MCF 10A (cell line): ENCODE measurements at regions of chr1 and their contacts with region 1.

Region 1: GRCh38 chr1:154974063-154974807 is at the start of gene CKS1B:
- DNase-seq: peak; percentile 100
- H3K4me3 Mint-ChIP-seq: no peak within 1 kb of the TSS
- H3K27ac Mint-ChIP-seq: no peak within 1 kb of the TSS
- H3K4me1 Mint-ChIP-seq: peaks cover 32% of the 10 kb centered on the region
- H3K27me3 Mint-ChIP-seq: no peaks in the 10 kb centered on the region
- CTCF ChIP-seq: no peak
- total RNA-seq, gene CKS1B: 285 and 289 TPM in 2 replicates

Region 2: GRCh38 chr1:154936555-154937084 is 37.6 kb before region 1 on chr1 and contains the start of gene PMVK:
- CTCF ChIA-PET with region 1: interaction called, 5 read pairs
- POLR2A ChIA-PET with region 1: interaction called, 146 read pairs
- intact Hi-C with region 1: no loop called
- DNase-seq: peak; percentile 99
- H3K4me3 Mint-ChIP-seq: peak within 1 kb of the TSS; percentile 90
- H3K27ac Mint-ChIP-seq: peak within 1 kb of the TSS; percentile 100
- H3K4me1 Mint-ChIP-seq: peaks cover 49% of the 10 kb centered on the region
- H3K27me3 Mint-ChIP-seq: no peaks in the 10 kb centered on the region
- CTCF ChIP-seq: peak; percentile 26
- total RNA-seq, gene PMVK: 57.7 and 68.9 TPM in 2 replicates

Region 3: GRCh38 chr1:154992721-154993571 is 18.7 kb after region 1 on chr1:
- CTCF ChIA-PET with region 1: interaction called, 40 read pairs
- POLR2A ChIA-PET with region 1: interaction called, 1,917 read pairs
- intact Hi-C with region 1: no loop called
- DNase-seq: no peak
- H3K4me3 Mint-ChIP-seq: no peak overlapping the region
- H3K27ac Mint-ChIP-seq: peak overlapping the region; percentile 50
- H3K4me1 Mint-ChIP-seq: peaks cover 32% of the 10 kb centered on the region
- H3K27me3 Mint-ChIP-seq: no peaks in the 10 kb centered on the region
- CTCF ChIP-seq: no peak

Region 4: DNA sequence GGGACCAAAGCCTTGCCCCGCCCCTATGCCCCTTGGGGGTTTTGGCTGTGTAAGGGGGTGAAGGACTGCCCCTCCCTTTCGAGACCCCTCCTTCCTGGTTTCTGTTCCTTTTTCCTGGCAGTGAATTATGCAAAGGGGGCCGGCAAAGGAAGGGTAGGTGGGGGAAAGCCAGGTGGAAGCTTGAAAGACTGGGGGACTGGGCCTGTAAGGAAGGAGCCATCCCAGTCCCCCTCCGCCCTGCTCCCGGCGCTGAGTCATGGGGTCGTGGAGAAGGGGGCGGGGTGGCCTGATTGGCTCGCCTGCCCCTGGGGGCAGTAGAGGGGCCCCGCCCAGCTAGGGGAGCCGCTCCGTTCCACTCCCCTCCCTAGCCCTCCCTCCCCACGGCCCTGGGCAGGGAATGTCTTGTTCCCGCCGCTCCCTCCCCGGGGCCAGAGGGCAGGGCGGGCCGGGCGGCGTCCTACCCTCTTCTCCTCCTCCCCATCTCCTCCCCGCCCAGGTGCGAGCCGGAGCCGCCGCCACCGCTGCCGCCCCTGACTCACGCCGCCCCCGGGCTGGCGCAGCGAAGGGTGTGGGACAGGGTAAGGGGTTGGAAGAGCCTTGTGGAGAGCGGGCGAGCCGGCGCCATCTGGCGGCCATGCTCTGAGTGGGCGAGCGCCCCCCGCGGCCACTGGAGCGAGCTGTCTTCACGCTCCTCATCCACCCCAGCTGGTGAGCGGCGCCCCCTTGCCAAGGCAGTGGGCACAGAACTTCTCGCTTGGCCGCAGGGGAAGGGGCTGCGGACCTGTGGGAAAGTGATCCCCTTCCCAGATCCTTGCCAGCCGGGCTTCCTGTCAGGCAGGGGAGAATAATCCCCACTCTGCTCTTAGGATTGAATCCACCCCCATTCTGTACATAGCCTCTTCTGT is 43.1 kb after region 1 on chr1:
- CTCF ChIA-PET with region 1: interaction called, 8 read pairs
- POLR2A ChIA-PET with region 1: interaction called, 312 read pairs
- intact Hi-C with region 1: loop called (anchors 1 kb)
- DNase-seq: peak; percentile 99
- H3K4me3 Mint-ChIP-seq: peak overlapping the region; percentile 62
- H3K27ac Mint-ChIP-seq: peak overlapping the region; percentile 80
- H3K4me1 Mint-ChIP-seq: peaks cover 78% of the 10 kb centered on the region
- H3K27me3 Mint-ChIP-seq: no peaks in the 10 kb centered on the region
- CTCF ChIP-seq: peak; percentile 100

Region 5: GRCh38 chr1:155044812-155045690 is 70.8 kb after region 1 on chr1:
- CTCF ChIA-PET with region 1: interaction called, 12 read pairs
- POLR2A ChIA-PET with region 1: interaction called, 156 read pairs
- intact Hi-C with region 1: loop called (anchors 2 kb)
- DNase-seq: peak; percentile 90
- H3K4me3 Mint-ChIP-seq: no peak overlapping the region
- H3K27ac Mint-ChIP-seq: no peak overlapping the region
- H3K4me1 Mint-ChIP-seq: peaks cover 37% of the 10 kb centered on the region
- H3K27me3 Mint-ChIP-seq: no peaks in the 10 kb centered on the region
- CTCF ChIP-seq: peak; percentile 83

Region 6: DNA sequence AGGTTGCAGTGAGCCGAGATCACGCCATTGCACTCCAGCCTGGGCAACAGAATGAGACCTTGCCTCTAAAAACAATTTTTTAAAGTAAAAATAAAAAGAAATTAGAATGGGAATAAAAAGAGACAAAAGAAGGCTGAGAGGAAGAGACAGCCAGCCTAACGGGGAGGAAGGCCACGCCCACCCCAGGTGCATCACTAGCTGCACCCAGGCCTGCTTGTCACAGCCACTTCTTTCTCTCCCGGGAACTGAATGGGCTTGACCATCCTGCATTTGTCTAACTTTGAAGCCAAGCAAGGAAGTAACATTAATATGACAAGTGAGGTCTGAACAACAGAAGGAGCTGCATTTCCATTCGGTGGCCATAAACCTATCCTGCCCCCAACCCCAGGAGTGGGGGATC is 132.6 kb after region 1 on chr1:
- CTCF ChIA-PET with region 1: no interaction called
- POLR2A ChIA-PET with region 1: no interaction called
- intact Hi-C with region 1: no loop called
- DNase-seq: no peak
- H3K4me3 Mint-ChIP-seq: no peak overlapping the region
- H3K27ac Mint-ChIP-seq: no peak overlapping the region
- H3K4me1 Mint-ChIP-seq: peaks cover 18% of the 10 kb centered on the region
- H3K27me3 Mint-ChIP-seq: no peaks in the 10 kb centered on the region
- CTCF ChIP-seq: no peak

Region 7: GRCh38 chr1:155127105-155127964 is 153.1 kb after region 1 on chr1 and contains the start of gene EFNA1:
- CTCF ChIA-PET with region 1: no interaction called
- POLR2A ChIA-PET with region 1: interaction called, 74 read pairs
- intact Hi-C with region 1: no loop called
- DNase-seq: peak; percentile 99
- H3K4me3 Mint-ChIP-seq: peak within 1 kb of the TSS; percentile 100
- H3K27ac Mint-ChIP-seq: peak within 1 kb of the TSS; percentile 90
- H3K4me1 Mint-ChIP-seq: peaks cover 60% of the 10 kb centered on the region
- H3K27me3 Mint-ChIP-seq: no peaks in the 10 kb centered on the region
- CTCF ChIP-seq: no peak
- total RNA-seq, gene EFNA1: 38.9 and 42.3 TPM in 2 replicates

Region 8: DNA sequence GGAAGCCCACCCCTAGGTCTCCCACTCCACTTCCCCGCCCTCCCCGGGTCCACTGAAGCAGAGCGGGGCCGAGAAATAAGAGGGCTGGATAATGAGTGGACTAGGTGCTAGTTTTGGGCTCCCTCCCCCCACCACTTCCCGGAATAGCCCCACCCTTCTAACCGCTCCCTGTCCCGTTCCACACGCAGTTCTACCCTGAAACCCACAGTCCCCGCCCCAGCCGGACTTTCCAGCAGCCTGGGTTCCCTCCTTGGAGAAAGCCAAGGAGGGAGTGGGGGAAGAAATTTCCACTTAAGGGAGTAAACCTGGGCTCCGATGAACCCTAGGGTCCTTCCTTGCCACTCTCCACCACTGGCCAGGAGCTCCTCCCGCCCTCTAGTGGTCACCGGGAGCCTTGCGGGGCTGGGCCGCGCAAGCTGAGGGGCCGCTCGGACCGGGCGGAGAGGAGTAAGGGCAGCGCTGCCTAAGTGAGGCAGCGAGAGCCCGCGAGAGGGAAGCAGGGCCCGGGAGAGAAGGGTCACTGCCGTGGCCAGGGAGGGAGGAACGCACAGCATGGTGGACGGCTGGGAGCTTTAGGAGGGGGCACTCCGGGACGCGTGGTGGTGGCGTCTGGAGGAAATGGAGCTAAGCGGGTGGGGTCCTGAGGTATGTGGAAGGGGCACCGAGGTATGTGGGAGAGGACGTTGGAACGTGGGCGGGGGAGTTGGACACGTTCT is 219.2 kb after region 1 on chr1:
- CTCF ChIA-PET with region 1: no interaction called
- POLR2A ChIA-PET with region 1: interaction called, 19 read pairs
- intact Hi-C with region 1: no loop called
- DNase-seq: peak; percentile 100
- H3K4me3 Mint-ChIP-seq: peak overlapping the region; percentile 94
- H3K27ac Mint-ChIP-seq: peak overlapping the region; percentile 100
- H3K4me1 Mint-ChIP-seq: peaks cover 32% of the 10 kb centered on the region
- H3K27me3 Mint-ChIP-seq: no peaks in the 10 kb centered on the region
- CTCF ChIP-seq: peak; percentile 99

Region 9: DNA sequence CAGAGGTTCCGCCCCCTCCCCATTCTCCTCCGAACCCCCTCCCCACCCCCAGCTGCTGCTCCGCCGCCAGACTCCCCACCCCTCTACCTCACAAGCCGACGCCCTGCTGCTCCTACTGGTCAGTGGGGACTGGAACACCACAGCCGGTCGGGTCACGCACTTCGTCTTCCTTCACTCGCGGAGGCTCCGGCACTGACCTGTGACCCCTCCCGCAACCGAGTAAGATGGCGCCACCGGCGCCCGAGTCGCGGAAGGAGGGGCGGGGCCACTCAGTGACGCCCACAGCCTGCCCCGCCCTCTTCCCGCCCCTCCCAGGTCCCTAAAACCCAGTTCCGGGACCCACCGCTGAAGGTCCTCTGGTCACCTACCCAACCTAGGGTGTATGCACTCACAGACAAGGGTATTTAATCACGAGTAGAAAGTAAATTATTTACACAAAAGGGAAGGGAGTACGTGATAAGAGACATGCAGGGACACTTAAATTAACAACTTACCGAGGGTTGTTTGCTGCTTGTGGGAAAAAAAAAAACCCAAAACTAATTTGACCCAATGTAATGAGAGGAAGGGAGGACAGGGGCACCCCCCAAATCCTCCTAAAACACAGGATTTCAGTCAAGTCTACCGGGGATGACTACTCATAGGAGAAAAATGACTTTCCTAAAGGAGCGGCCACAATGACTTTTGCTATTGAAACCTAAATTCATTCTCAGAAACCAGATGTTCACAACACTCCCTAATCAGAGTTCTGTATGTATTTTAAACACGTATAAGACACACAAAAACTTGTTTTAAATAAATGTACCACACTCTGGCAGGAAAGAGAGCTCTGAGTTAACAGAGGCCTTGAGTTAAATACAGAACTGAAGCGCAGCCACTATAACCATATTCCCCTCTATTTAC is 937.2 kb after region 1 on chr1 and contains the start of gene RIT1:
- CTCF ChIA-PET with region 1: no interaction called
- POLR2A ChIA-PET with region 1: no interaction called
- intact Hi-C with region 1: no loop called
- DNase-seq: peak; percentile 88
- H3K4me3 Mint-ChIP-seq: peak within 1 kb of the TSS; percentile 87
- H3K27ac Mint-ChIP-seq: peak within 1 kb of the TSS; percentile 96
- H3K4me1 Mint-ChIP-seq: peaks cover 20% of the 10 kb centered on the region
- H3K27me3 Mint-ChIP-seq: no peaks in the 10 kb centered on the region
- CTCF ChIP-seq: no peak
- total RNA-seq, gene RIT1: 36.2 and 43.1 TPM in 2 replicates